Adrenal gland (tissue), 19 donors: ENCODE measurements at regions of chr3 and their contacts with region 1.

Region 1: GRCh38 chr3:16884748-16885592 is at the start of gene PLCL2:
- DNase-seq: peak; percentile 52 to 73 (median 58)
- H3K4me3 ChIP-seq: peak within 1 kb of the TSS; percentile 56 to 92 (median 74)
- H3K27ac ChIP-seq: peak within 1 kb of the TSS; percentile 73 to 95 (median 85)
- H3K4me1 ChIP-seq: peaks cover 17 to 42% of the 10 kb centered on the region in 2 donors
- H3K27me3 ChIP-seq: no peaks in the 10 kb centered on the region
- CTCF ChIP-seq: no peak
- POLR2A ChIP-seq: peak in 1 of 2 donors; percentile 27
- total RNA-seq, gene PLCL2: 10.9 to 44.0 (median 36.0) TPM

Region 2: GRCh38 chr3:16448639-16449070 is 436.3 kb before region 1 on chr3:
- intact Hi-C with region 1: no loop called
- DNase-seq: peak in 6 of 7 donors; percentile 41 to 74 (median 47)
- H3K4me3 ChIP-seq: no peak overlapping the region
- H3K27ac ChIP-seq: peak overlapping the region in 1 of 5 donors; percentile 59
- H3K4me1 ChIP-seq: peaks cover 0 to 7% of the 10 kb centered on the region in 2 donors
- H3K27me3 ChIP-seq: no peaks in the 10 kb centered on the region
- CTCF ChIP-seq: no peak
- POLR2A ChIP-seq: no peak

Region 3: DNA sequence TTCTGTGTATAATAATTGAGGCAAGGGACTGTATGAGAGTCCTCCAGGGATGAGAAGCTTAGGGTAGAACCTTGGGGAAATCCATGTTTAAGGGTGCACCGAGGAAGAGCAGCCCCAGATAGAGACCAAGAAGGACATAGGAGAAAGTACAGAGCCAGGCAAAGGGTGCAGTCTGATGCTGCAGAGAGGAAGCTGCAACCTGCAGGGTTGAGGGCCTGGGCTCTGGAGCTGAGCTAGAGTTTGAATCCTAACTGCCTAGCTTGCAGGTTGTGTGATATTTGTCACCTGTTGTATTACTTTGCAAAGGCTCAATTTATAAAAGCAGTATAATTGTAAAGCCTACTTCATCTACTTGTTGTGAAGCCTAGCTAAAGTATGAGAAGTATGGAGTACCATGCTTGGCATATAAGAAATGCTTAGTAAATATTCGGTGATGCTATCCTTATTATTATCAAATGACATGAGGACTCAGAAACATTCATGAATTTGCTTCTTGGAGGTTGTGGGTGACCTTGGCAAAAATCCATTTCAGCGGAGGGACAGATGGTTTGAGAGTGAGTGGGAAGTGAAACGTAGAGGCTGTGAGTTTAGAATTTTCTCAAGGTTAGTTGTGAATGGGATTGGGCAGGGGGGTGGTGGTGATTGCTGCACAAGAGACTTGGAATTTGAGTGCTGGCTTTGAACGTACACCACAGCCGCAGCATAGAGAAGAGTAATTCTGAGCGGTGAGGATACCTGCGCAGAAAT is 43.6 kb after region 1 on chr3:
- intact Hi-C with region 1: no loop called
- DNase-seq: peak in 5 of 7 donors; percentile 31 to 57 (median 42)
- H3K4me3 ChIP-seq: no peak overlapping the region
- H3K27ac ChIP-seq: no peak overlapping the region
- H3K4me1 ChIP-seq: peaks cover 6 to 20% of the 10 kb centered on the region in 2 donors
- H3K27me3 ChIP-seq: no peaks in the 10 kb centered on the region
- CTCF ChIP-seq: no peak
- POLR2A ChIP-seq: no peak

Region 4: DNA sequence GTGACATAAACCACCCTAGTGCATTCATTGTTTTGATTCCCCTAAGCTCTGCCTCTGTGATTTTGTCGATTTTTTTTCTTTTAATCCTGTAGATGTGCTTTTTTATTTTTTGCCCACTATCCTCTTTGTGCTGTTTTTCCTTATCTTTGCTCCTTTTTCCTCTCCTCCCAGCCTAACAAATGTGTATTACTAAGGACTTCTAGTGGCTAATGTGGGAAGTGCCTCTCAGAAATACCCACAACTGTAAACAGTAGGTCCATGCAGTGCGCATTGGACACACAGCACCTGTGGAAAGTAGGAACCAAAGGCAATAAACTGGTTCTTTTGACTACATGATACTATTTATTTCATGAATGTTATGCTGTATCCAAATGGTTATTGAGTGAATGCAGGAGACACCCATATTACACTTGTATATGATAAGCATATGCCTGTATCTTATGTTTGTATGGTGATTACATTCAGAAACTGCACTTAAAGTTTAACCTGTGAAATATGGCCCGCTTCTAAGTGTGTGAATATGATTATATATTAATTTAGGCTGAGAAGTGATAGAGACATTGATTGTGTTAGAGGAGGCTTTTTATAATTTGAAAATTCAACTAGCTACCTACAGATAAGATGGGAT is 147.6 kb after region 1 on chr3:
- intact Hi-C with region 1: loop called in 1 of 2 experiments (anchors 5 kb)
- DNase-seq: no peak
- H3K4me3 ChIP-seq: no peak overlapping the region
- H3K27ac ChIP-seq: no peak overlapping the region
- H3K4me1 ChIP-seq: peaks cover 0 to 9% of the 10 kb centered on the region in 2 donors
- H3K27me3 ChIP-seq: no peaks in the 10 kb centered on the region
- CTCF ChIP-seq: peak; percentile 63 to 84 (median 76)
- POLR2A ChIP-seq: no peak

Region 5: DNA sequence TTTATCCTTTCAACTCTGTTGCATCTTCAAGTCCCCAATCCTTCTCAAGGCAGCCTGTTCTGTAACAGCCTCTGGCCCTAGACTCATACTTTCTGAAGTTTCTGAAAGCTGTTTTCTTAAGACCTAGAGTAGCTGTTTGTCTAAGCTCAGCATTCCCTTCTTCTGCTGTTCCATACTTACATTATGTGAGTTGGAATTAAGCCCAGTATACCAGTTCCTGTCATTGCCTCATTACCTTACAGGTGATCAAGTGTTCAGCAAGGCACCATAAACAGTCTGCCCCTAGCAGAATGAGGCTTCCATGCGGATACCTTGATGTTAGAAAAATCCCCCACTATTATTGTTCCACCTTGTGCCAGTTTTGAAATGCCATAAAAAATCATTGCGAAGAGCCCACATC is 180.3 kb after region 1 on chr3:
- intact Hi-C with region 1: no loop called
- DNase-seq: no peak
- H3K4me3 ChIP-seq: no peak overlapping the region
- H3K27ac ChIP-seq: no peak overlapping the region
- H3K4me1 ChIP-seq: no peaks in the 10 kb centered on the region
- H3K27me3 ChIP-seq: no peaks in the 10 kb centered on the region
- CTCF ChIP-seq: no peak
- POLR2A ChIP-seq: no peak